K562 (cell line): ENCODE measurements at regions of chr9 and their contacts with region 1.

Region 1: GRCh38 chr9:95580812-95581761 is 64.3 kb upstream of the PTCH1 start:
- DNase-seq: no peak
- ATAC-seq: no peak
- H3K4me3 ChIP-seq: no peak overlapping the region
- H3K27ac ChIP-seq: no peak overlapping the region
- H3K4me1 ChIP-seq: no peaks in the 10 kb centered on the region
- H3K27me3 ChIP-seq: peaks cover 45 to 70% of the 10 kb centered on the region in 2 experiments
- CTCF ChIP-seq: no peak
- EP300 ChIP-seq: no peak
- POLR2A ChIP-seq: no peak
- RAD21 ChIP-seq: no peak

Region 2: GRCh38 chr9:95434116-95435073 is 146.7 kb before region 1 on chr9:
- CTCF ChIA-PET with region 1: no interaction called
- POLR2A ChIA-PET with region 1: no interaction called
- in situ Hi-C with region 1: no loop called
- intact Hi-C with region 1: loop called (anchors 10 kb)
- DNase-seq: peak; percentile 91 to 93 (median 91)
- ATAC-seq: peak; percentile 98
- H3K4me3 ChIP-seq: peak overlapping the region; percentile 18
- H3K27ac ChIP-seq: peak overlapping the region; percentile 47
- H3K4me1 ChIP-seq: peaks cover 11 to 17% of the 10 kb centered on the region in 2 experiments; a peak in 4 of 5 replicates
- H3K27me3 ChIP-seq: no peaks in the 10 kb centered on the region
- CTCF ChIP-seq: no peak
- EP300 ChIP-seq: peak; percentile 72
- POLR2A ChIP-seq: peak; percentile 53; the same call in 1 of the 2 replicates
- RAD21 ChIP-seq: no peak

Region 3: GRCh38 chr9:95537328-95537727 is 43.8 kb before region 1 on chr9:
- CTCF ChIA-PET with region 1: no interaction called
- POLR2A ChIA-PET with region 1: no interaction called
- in situ Hi-C with region 1: no loop called
- intact Hi-C with region 1: no loop called
- DNase-seq: no peak
- ATAC-seq: no peak
- H3K4me3 ChIP-seq: no peak overlapping the region
- H3K27ac ChIP-seq: no peak overlapping the region
- H3K4me1 ChIP-seq: no peaks in the 10 kb centered on the region
- H3K27me3 ChIP-seq: peaks cover 12 to 21% of the 10 kb centered on the region in 2 experiments
- CTCF ChIP-seq: no peak
- EP300 ChIP-seq: no peak
- POLR2A ChIP-seq: no peak
- RAD21 ChIP-seq: no peak